ENCODE measurements at regions of chr6 and their contacts with region 1.

Region 1: GRCh38 chr6:53492860-53493634 is 51.9 kb downstream of the GCLC start:
- DNase-seq: peak; percentile 40 to 74
- ATAC-seq: peak; percentile 80 to 82
- H3K4me3 ChIP-seq: peak overlapping the region; percentile 40
- H3K27ac ChIP-seq: peak overlapping the region; percentile 75 to 84
- H3K4me1 ChIP-seq: peaks cover 43% of the 10 kb centered on the region
- CTCF ChIP-seq: peak; percentile 80
- EP300 ChIP-seq: no peak
- POLR2A ChIP-seq: no peak
- RAD21 ChIP-seq: peak; percentile 77 to 80

Region 2: DNA sequence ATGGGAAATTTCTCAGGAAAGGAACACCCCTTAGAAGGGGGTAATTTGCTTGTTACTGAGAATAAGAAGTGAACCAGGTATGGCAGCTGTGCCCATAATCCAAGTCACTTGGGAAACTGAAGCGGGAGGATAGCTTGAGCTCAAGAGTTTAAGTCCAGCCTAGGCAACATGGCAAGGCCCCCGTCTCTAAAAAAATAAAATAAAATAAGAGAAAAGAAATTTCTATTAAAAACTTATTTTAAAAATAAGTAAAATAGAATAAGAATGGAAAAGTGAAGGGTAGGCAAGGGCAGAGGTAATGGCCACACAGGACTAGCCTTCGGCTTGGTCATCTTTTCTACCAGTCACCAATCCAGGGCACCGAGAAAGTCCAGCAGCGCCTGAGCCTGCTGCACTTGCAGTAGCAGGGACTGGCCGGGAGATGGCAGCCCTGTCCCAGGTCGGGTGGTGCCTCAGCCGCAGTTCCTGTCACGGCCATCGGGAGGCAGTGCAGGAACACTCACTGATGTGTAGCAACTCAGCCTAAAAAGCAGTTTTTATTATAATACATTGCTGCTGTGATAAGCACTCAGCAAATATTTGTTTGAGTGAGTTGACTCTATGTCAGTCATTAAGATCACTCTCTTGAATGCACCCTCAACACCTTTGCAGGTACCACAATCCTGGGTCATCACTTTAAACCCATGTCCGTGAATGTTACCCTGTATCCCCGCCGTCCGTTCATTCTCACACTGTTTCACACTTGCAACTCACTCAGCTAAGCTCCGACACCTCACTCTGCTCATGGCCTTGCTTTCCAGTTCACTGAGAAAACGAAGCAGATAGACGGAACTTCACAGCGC is 321.2 kb before region 1 on chr6:
- CTCF ChIA-PET with region 1: interaction called, 23 read pairs
- POLR2A ChIA-PET with region 1: no interaction called
- DNase-seq: peak; percentile 33 to 75
- ATAC-seq: peak; percentile 85 to 90
- H3K4me3 ChIP-seq: no peak overlapping the region
- H3K27ac ChIP-seq: no peak overlapping the region
- H3K4me1 ChIP-seq: peaks cover 7% of the 10 kb centered on the region; the same call in 1 of the 3 replicates
- CTCF ChIP-seq: peak; percentile 99
- EP300 ChIP-seq: no peak
- POLR2A ChIP-seq: no peak
- RAD21 ChIP-seq: peak; percentile 99

Region 3: GRCh38 chr6:53476964-53477363 is 16.1 kb before region 1 on chr6:
- CTCF ChIA-PET with region 1: no interaction called
- POLR2A ChIA-PET with region 1: no interaction called
- DNase-seq: no peak
- ATAC-seq: no peak
- H3K4me3 ChIP-seq: no peak overlapping the region
- H3K27ac ChIP-seq: no peak overlapping the region
- H3K4me1 ChIP-seq: no peaks in the 10 kb centered on the region
- CTCF ChIP-seq: no peak
- EP300 ChIP-seq: no peak
- POLR2A ChIP-seq: no peak
- RAD21 ChIP-seq: no peak

Region 4: GRCh38 chr6:53530346-53530745 is 37.3 kb after region 1 on chr6:
- CTCF ChIA-PET with region 1: interaction called, 12 read pairs
- POLR2A ChIA-PET with region 1: no interaction called
- DNase-seq: no peak
- ATAC-seq: peak in 1 of 2 experiments; percentile 31; a peak in 2 of 6 replicates
- H3K4me3 ChIP-seq: no peak overlapping the region
- H3K27ac ChIP-seq: peak overlapping the region in 1 of 2 experiments; percentile 75; a peak in 3 of 6 replicates
- H3K4me1 ChIP-seq: peaks cover 97% of the 10 kb centered on the region
- CTCF ChIP-seq: no peak
- EP300 ChIP-seq: no peak
- POLR2A ChIP-seq: no peak
- RAD21 ChIP-seq: no peak

Region 5: DNA sequence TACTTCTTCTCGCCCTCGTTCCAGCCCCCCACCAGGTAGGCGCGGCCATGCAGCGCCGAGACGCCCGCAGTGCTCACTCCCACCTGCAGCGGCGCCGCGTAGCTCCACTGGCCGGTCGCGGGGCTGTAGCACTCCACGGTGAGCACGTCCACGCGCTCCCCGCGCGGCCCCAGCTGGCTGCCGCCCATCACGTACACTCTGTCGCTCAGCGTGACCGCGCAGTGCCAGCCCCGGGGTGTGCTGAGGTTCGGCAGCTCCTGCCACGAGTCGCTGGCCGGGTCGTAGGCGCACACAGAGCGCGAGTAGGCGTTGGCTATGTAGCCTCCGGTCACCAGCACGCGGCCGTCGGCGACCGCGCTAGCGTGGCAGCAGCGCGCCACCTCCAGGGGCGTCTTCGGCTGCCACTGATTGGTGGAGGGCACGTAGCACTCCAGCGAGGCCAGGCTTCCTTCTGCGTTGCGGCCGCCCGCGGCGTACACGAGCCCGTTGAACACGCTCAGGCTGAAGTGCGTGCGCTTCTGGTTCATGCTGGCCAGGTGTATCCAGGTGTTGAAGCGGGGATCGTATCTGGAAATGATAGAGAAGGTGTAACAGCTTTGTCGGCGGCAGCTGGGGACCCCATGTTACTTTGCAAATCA is 158.8 kb after region 1 on chr6:
- CTCF ChIA-PET with region 1: interaction called, 74 read pairs
- POLR2A ChIA-PET with region 1: interaction called, 12 read pairs
- DNase-seq: peak; percentile 44 to 88
- ATAC-seq: peak; percentile 98
- H3K4me3 ChIP-seq: peak overlapping the region; percentile 58
- H3K27ac ChIP-seq: peak overlapping the region; percentile 85 to 99
- H3K4me1 ChIP-seq: peaks cover 34% of the 10 kb centered on the region
- CTCF ChIP-seq: peak; percentile 44
- EP300 ChIP-seq: no peak
- POLR2A ChIP-seq: peak; percentile 64
- RAD21 ChIP-seq: peak; percentile 36 to 52; a peak in 3 of 5 replicates

Region 6: GRCh38 chr6:53718597-53719460 is 225.8 kb after region 1 on chr6:
- CTCF ChIA-PET with region 1: interaction called, 169 read pairs
- POLR2A ChIA-PET with region 1: no interaction called
- DNase-seq: peak; percentile 46 to 64
- ATAC-seq: peak; percentile 86 to 88
- H3K4me3 ChIP-seq: no peak overlapping the region
- H3K27ac ChIP-seq: no peak overlapping the region
- H3K4me1 ChIP-seq: peaks cover 7% of the 10 kb centered on the region; the same call in 1 of the 3 replicates
- CTCF ChIP-seq: peak; percentile 71
- EP300 ChIP-seq: no peak
- POLR2A ChIP-seq: no peak
- RAD21 ChIP-seq: peak; percentile 32 to 51; a peak in 4 of 5 replicates